A673 (cell line): ENCODE measurements at regions of chr17 and their contacts with region 1.

Region 1: DNA sequence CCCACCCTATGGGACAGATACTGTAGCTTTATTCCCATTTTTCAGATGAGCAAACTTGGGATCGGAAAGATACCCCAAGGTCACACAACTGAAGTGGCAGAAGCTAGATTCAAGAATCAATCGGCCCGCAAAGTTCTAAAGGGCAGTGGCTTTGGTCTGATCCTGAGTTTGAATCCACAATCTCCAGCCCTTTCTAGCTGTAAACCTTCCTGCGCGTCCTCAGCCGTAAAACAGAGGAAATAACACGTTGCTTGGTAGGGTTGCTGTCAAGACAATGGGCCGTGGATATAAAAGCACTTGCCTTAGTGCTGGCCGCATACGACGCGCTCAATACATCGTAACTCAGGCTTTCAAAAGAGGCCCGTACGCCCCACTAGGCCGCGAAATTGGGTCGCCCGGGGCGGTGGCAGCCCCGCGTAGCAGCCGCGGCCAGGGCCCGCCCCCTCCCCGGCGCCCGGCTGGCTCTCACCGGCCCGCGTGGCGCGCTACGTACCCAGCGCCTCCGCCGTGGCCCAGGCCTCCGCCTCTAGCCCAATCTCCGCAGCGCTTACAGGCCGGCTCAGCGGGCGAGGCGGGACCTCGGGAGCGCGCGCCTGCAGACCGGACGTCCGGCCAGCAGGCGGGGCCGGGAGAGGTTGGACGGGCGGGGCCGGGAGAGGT is at the start of gene DCAKD:
- DNase-seq: peak; percentile 93
- H3K4me3 ChIP-seq: peak within 1 kb of the TSS; percentile 56
- H3K27ac ChIP-seq: peak within 1 kb of the TSS; percentile 86
- H3K4me1 ChIP-seq: no peaks in the 10 kb centered on the region
- H3K27me3 ChIP-seq: no peaks in the 10 kb centered on the region
- CTCF ChIP-seq: no peak
- total RNA-seq, gene DCAKD: 19.1 and 21.8 TPM in 2 replicates

Region 2: DNA sequence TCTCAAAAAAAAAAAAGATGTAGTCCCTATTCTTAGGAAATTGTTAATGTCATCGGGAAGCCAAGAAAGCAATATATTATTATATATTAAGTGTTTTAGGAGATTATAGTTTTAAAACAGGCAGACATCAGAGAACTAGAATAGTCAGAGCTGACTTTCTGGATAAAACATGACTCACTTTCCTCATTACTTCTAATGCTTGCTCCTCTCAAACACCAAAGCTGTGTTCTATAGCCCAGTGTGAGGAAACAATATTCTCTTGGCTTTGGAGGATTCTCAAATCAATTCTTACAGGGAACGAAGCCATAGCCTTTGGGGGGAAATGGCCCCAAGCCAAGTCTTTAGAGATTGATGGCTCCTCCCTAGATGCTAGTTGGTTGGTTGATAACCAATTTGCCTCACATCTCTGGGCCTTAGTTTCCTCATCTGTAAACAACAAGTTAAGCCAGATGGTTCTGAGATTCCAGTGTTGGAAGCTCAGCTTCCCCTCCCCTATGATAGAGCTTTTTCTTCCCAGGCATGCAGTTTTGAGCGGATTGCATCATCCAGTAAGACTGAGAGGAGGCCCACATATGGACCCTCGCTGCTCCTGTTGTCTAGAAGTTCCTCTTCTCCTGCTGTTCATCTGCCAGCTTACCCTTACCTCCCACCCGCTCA is 22.4 kb after region 1 on chr17:
- CTCF ChIA-PET with region 1: no interaction called
- POLR2A ChIA-PET with region 1: no interaction called
- intact Hi-C with region 1: no loop called
- DNase-seq: peak; percentile 40
- H3K4me3 ChIP-seq: no peak overlapping the region
- H3K27ac ChIP-seq: peak overlapping the region; percentile 80
- H3K4me1 ChIP-seq: peaks cover 9% of the 10 kb centered on the region
- H3K27me3 ChIP-seq: no peaks in the 10 kb centered on the region
- CTCF ChIP-seq: no peak

Region 3: DNA sequence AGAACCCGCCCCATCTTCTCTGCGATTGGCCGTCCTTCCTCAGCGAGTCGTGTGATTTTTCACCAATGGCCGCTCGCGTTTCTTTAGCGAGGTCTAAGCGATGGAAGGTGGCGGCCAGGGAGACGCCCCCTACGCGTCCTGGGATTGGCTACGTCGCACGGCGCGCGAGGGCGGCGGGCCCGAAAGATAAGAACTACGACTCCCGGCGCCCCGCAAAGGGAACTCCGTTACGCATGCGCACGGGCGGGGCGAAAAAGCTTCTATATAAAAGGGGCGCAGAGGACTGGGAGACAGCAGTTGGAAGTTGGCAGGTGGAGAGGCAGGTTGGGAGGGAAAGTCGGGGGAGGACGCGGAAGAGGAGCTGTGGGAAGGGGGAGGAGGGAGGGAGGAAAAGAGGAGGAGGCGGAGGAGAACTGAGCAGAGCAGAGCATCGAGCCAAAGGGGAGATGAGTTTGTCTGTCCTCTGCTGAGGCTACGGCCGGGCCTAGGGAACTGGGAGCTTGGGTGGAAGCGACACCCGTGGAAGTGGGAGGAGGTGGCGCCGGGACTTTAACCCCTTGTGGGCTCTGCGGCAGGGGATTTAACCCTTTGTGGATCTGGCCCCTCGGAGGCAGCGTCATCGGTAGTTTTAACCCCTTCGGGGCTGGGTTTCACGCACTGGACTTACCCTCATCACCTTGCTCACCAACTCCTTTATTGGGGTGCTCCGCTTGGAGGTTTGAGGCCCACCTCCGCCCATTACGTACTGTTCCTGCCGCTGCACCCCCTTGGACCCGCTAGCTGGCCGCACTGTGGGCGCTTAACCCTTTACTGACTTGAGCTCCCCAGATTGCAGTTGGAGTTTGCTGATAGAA is 97.2 kb after region 1 on chr17 and contains the start of gene HEXIM1:
- CTCF ChIA-PET with region 1: interaction called, 14 read pairs
- POLR2A ChIA-PET with region 1: no interaction called
- intact Hi-C with region 1: no loop called
- DNase-seq: peak; percentile 98
- H3K4me3 ChIP-seq: peak within 1 kb of the TSS; percentile 81
- H3K27ac ChIP-seq: peak within 1 kb of the TSS; percentile 98
- H3K4me1 ChIP-seq: peaks cover 19% of the 10 kb centered on the region
- H3K27me3 ChIP-seq: no peaks in the 10 kb centered on the region
- CTCF ChIP-seq: no peak
- total RNA-seq, gene HEXIM1: 21.2 and 22.1 TPM in 2 replicates